Psoas muscle (tissue), 8 donors: ENCODE measurements at regions of chr12 and their contacts with region 1.

Region 1: GRCh38 chr12:18521284-18521860 is 216.4 kb downstream of the PLCZ1 start:
- DNase-seq: no peak
- ATAC-seq: no peak
- H3K4me3 ChIP-seq: no peak overlapping the region
- H3K27ac ChIP-seq: no peak overlapping the region
- H3K4me1 ChIP-seq: no peaks in the 10 kb centered on the region
- H3K27me3 ChIP-seq: no peaks in the 10 kb centered on the region
- CTCF ChIP-seq: no peak

Region 2: GRCh38 chr12:18446061-18446644 is 75.2 kb before region 1 on chr12:
- intact Hi-C with region 1: no loop called
- DNase-seq: no peak
- ATAC-seq: no peak
- H3K4me3 ChIP-seq: no peak overlapping the region
- H3K27ac ChIP-seq: no peak overlapping the region
- H3K4me1 ChIP-seq: no peaks in the 10 kb centered on the region
- H3K27me3 ChIP-seq: no peaks in the 10 kb centered on the region
- CTCF ChIP-seq: no peak

Region 3: DNA sequence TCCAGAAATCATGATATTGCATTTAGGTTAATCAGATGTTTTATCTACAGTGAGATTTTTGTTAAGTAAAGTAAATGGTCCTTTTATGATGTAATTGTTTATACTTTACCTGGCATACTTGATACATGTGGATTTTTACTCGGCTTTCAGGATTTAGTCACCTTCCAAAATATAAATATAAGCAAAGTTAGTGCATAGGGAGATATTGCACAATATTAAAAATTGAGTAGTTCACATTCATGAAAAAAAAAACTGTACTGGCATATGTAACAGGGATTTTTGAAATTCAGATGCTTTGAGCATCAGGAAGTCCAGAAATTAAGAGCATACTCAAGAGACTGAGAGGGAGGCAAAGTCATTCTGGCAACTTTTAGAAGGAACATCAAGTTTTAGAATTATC is 42.9 kb after region 1 on chr12:
- intact Hi-C with region 1: loop called in 1 of 2 experiments (anchors 1 kb)
- DNase-seq: no peak
- ATAC-seq: no peak
- H3K4me3 ChIP-seq: no peak overlapping the region
- H3K27ac ChIP-seq: no peak overlapping the region
- H3K4me1 ChIP-seq: no peaks in the 10 kb centered on the region
- H3K27me3 ChIP-seq: no peaks in the 10 kb centered on the region
- CTCF ChIP-seq: no peak